ENCODE measurements at regions of chr1 and their contacts with region 1.

Region 1: GRCh38 chr1:224356685-224357625 is at the start of gene CNIH4:
- DNase-seq: peak; percentile 82 to 96 (median 90)
- ATAC-seq: peak; percentile 98
- H3K4me3 Mint-ChIP-seq: peak within 1 kb of the TSS; percentile 89 to 97 (median 94)
- H3K27ac Mint-ChIP-seq: peak within 1 kb of the TSS; percentile 76 to 94 (median 92)
- H3K4me1 Mint-ChIP-seq: peaks cover 26 to 61% (median 53%) of the 10 kb centered on the region in 4 donors
- H3K27me3 Mint-ChIP-seq: no peaks in the 10 kb centered on the region
- polyA plus RNA-seq, gene CNIH4: 29.7 to 46.6 (median 45.3) TPM

Region 2: GRCh38 chr1:224292419-224292818 is 64.5 kb before region 1 on chr1:
- POLR2A ChIA-PET with region 1: no interaction called
- DNase-seq: no peak
- ATAC-seq: no peak
- H3K4me3 Mint-ChIP-seq: no peak overlapping the region
- H3K27ac Mint-ChIP-seq: peak overlapping the region in 1 of 10 donors; percentile 2
- H3K4me1 Mint-ChIP-seq: no peaks in the 10 kb centered on the region
- H3K27me3 Mint-ChIP-seq: no peaks in the 10 kb centered on the region

Region 3: DNA sequence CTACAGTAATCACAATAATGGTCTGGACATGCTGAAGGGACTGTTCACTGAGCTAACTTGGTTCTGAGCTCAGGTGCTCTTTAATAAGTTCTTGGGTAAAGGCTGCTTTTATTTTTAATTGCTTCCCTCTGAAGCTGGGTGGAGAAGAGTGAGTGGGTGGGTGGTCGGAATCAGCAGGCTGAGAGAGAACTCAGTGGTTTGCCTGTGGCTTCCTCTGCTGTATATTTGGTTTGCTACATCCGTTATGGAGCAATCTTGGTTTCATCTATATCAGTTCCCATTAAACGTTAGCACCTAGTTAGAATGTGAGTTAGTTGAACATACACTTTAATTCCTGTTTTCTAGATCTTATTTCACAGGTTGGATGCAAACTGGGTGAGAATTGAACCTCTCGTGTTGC is 23.0 kb after region 1 on chr1:
- POLR2A ChIA-PET with region 1: interaction called, 11 read pairs
- DNase-seq: peak in 8 of 10 donors; percentile 16 to 67 (median 36)
- ATAC-seq: peak; percentile 70 to 93
- H3K4me3 Mint-ChIP-seq: peak overlapping the region; percentile 65 to 81 (median 76)
- H3K27ac Mint-ChIP-seq: peak overlapping the region; percentile 65 to 87 (median 79)
- H3K4me1 Mint-ChIP-seq: peaks cover 47 to 85% (median 81%) of the 10 kb centered on the region in 4 donors
- H3K27me3 Mint-ChIP-seq: no peaks in the 10 kb centered on the region

Region 4: DNA sequence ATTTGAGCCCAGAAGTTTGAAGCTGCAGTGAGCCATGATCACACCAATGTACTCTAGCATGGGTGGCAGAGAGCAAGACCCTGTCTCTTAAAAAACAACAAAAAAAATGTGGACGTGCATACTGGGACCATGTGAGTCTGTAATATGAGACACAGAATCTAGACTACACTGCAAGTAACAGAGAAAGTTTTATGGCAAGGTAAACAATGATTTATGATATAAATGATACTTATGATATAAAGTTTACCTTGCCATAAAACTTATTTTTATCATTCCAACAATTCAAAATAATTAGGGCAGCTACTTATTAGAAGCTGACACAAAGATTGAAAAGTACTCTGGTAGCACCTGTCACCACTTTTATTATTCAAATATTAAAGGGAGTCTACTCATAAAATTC is 42.9 kb after region 1 on chr1:
- POLR2A ChIA-PET with region 1: no interaction called
- DNase-seq: no peak
- ATAC-seq: no peak
- H3K4me3 Mint-ChIP-seq: no peak overlapping the region
- H3K27ac Mint-ChIP-seq: peak overlapping the region in 9 of 10 donors; percentile 15 to 71 (median 29)
- H3K4me1 Mint-ChIP-seq: peaks cover 5 to 28% (median 12%) of the 10 kb centered on the region in 4 donors
- H3K27me3 Mint-ChIP-seq: no peaks in the 10 kb centered on the region